Dorsolateral prefrontal cortex (tissue), 120 donors: ENCODE measurements at regions of chr1 and their contacts with region 1.

Region 1: GRCh38 chr1:23344111-23344986 is at the start of gene HNRNPR:
- DNase-seq: peak; percentile 99 to 100 (median 100)
- H3K4me3 ChIP-seq: peak within 1 kb of the TSS; percentile 54 to 98 (median 87)
- H3K27ac ChIP-seq: peak within 1 kb of the TSS; percentile 83 to 99 (median 96)
- H3K27me3 ChIP-seq: no peaks in the 10 kb centered on the region
- CTCF ChIP-seq: peak in 45 of 56 donors; percentile 5 to 58 (median 35)
- total RNA-seq, gene HNRNPR: 86.5 to 128 (median 105) TPM

Region 2: GRCh38 chr1:23356471-23357137 is 12.3 kb after region 1 on chr1:
- intact Hi-C with region 1: loop called in 1 of 2 experiments (anchors 1 kb)
- DNase-seq: peak in 2 of 10 donors; percentile 34 to 41
- H3K4me3 ChIP-seq: peak overlapping the region in 35 of 59 donors; percentile 0 to 54 (median 20)
- H3K27ac ChIP-seq: peak overlapping the region in 58 of 59 donors; percentile 13 to 92 (median 80)
- H3K27me3 ChIP-seq: no peaks in the 10 kb centered on the region
- CTCF ChIP-seq: peak in 2 of 56 donors; percentile 11 to 30

Region 3: GRCh38 chr1:23367791-23368561 is 23.6 kb after region 1 on chr1:
- intact Hi-C with region 1: loop called (anchors 1 kb)
- DNase-seq: peak; percentile 98 to 99 (median 99)
- H3K4me3 ChIP-seq: peak overlapping the region; percentile 68 to 100 (median 93)
- H3K27ac ChIP-seq: peak overlapping the region; percentile 92 to 100 (median 99)
- H3K27me3 ChIP-seq: no peaks in the 10 kb centered on the region
- CTCF ChIP-seq: peak in 43 of 56 donors; percentile 11 to 58 (median 35)

Region 4: DNA sequence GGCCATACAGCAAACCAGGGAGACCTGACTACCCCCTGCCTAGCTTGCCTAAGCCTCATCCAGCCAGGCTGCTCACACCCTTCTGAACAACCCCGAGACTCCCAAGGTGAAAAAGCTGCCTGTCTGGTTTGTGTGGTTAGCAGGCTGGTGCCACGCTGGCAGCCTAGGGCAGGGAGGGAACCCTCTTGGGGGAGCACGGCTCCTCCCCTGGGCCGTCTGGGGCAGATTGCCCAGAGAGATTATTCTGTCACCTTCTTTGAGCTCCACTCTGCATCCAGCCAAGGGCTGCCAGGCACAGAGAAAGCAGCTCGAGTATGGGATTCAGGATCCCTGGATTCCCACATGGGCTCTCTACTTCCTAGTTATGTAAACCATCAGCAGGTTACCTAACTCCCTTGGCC is 107.7 kb after region 1 on chr1:
- intact Hi-C with region 1: no loop called
- DNase-seq: no peak
- H3K4me3 ChIP-seq: no peak overlapping the region
- H3K27ac ChIP-seq: no peak overlapping the region
- H3K27me3 ChIP-seq: no peaks in the 10 kb centered on the region
- CTCF ChIP-seq: no peak